HCT116 (cell line): ENCODE measurements at regions of chr11 and their contacts with region 1.

Region 1: DNA sequence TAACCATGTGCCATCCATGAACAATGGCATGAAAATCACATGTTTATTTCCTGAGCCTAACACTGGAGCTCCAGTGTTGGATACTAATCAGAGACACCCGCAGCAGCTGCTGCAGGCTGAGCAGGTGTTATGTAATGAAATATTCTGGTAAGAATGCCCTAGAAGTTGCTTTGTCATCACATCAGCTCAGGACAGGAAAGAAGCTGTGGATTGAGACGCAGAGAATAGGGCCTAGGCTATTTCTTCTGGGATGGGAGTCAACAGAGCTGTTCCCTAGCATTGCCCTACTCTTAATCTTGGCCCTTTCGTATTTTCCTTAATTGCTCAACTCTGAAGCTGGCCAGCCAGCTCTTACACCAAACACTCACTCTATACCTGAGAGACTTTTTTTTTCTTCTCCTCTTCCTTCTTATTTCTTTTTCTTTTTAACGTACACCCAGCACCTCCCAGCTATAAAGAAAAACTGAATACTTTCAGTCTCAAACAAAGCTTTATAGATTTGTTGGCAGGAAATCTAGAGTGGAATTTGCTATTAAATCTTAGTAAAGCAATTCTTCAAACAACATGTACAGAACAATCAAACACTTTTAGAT is 31.9 kb downstream of the RASSF10 start:
- DNase-seq: no peak
- ATAC-seq: no peak
- H3K4me3 ChIP-seq: no peak overlapping the region
- H3K27ac ChIP-seq: no peak overlapping the region
- H3K4me1 ChIP-seq: peaks cover 0 to 3% of the 10 kb centered on the region in 2 experiments; a peak in 1 of 4 replicates
- H3K27me3 ChIP-seq: no peaks in the 10 kb centered on the region
- CTCF ChIP-seq: no peak
- POLR2A ChIP-seq: no peak
- RAD21 ChIP-seq: no peak

Region 2: GRCh38 chr11:12993626-12994025 is 47.4 kb before region 1 on chr11:
- CTCF ChIA-PET with region 1: no interaction called
- POLR2A ChIA-PET with region 1: no interaction called
- RAD21 ChIA-PET with region 1: no interaction called
- intact Hi-C with region 1: loop called (anchors 1 kb)
- DNase-seq: no peak
- ATAC-seq: no peak
- H3K4me3 ChIP-seq: no peak overlapping the region
- H3K27ac ChIP-seq: no peak overlapping the region
- H3K4me1 ChIP-seq: peaks cover 0 to 13% of the 10 kb centered on the region in 2 experiments; a peak in 2 of 4 replicates
- H3K27me3 ChIP-seq: no peaks in the 10 kb centered on the region
- CTCF ChIP-seq: no peak
- POLR2A ChIP-seq: no peak
- RAD21 ChIP-seq: no peak

Region 3: DNA sequence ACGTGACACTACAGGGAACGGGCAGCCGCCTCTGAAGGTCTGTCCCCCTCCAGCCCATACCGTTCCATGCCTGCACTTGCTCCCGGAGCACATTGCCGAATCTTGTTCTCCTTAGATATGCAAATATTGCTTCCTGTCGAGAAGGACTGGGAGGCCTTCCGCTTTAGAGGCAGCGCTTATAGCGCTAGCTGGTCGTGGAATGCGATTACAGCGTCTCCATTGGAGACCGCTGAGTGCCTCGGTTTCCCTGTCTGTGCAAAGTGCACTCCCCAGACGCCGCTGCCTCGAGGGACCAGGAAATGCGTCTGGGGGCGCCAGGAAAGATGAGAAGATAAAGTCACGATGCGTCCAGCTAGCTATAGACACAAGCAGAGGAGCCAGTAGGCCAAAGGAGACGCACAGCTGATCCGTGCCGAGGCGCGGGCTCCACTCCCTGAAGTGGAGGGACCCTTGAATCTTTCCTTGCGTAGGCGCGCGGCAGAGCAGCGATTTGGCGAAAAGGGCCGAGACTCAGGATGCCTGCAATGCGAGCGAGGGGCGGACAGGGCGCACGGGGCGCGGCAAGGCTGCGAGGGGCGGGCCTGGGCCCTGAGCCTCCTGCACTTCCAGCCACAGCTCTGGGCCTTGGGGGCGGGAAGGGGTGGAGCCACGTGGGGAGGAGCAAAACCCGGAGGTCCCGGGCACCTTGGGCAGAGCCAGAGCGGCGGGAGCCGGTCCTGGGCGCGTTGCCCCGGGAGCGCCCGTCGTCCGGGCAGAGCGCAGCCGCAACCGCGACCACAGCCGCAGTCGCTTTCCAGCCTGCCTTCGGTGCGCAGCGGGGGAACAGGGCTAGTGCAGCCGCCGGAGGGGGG is 32.2 kb before region 1 on chr11 and contains the start of gene RASSF10:
- CTCF ChIA-PET with region 1: no interaction called
- POLR2A ChIA-PET with region 1: no interaction called
- RAD21 ChIA-PET with region 1: no interaction called
- intact Hi-C with region 1: no loop called
- DNase-seq: no peak
- ATAC-seq: no peak
- H3K4me3 ChIP-seq: no peak within 1 kb of the TSS
- H3K27ac ChIP-seq: no peak within 1 kb of the TSS
- H3K4me1 ChIP-seq: no peaks in the 10 kb centered on the region
- H3K27me3 ChIP-seq: no peaks in the 10 kb centered on the region
- CTCF ChIP-seq: no peak
- POLR2A ChIP-seq: no peak
- RAD21 ChIP-seq: no peak
- total RNA-seq, gene RASSF10: not detected

Region 4: GRCh38 chr11:13061284-13061990 is 20.4 kb after region 1 on chr11:
- CTCF ChIA-PET with region 1: no interaction called
- POLR2A ChIA-PET with region 1: no interaction called
- RAD21 ChIA-PET with region 1: no interaction called
- intact Hi-C with region 1: no loop called
- DNase-seq: no peak
- ATAC-seq: no peak
- H3K4me3 ChIP-seq: no peak overlapping the region
- H3K27ac ChIP-seq: no peak overlapping the region
- H3K4me1 ChIP-seq: no peaks in the 10 kb centered on the region
- H3K27me3 ChIP-seq: no peaks in the 10 kb centered on the region
- CTCF ChIP-seq: no peak
- POLR2A ChIP-seq: no peak
- RAD21 ChIP-seq: no peak